Transverse colon (tissue), 4 donors: ENCODE measurements at regions of chr16 and their contacts with region 1.

Region 1: DNA sequence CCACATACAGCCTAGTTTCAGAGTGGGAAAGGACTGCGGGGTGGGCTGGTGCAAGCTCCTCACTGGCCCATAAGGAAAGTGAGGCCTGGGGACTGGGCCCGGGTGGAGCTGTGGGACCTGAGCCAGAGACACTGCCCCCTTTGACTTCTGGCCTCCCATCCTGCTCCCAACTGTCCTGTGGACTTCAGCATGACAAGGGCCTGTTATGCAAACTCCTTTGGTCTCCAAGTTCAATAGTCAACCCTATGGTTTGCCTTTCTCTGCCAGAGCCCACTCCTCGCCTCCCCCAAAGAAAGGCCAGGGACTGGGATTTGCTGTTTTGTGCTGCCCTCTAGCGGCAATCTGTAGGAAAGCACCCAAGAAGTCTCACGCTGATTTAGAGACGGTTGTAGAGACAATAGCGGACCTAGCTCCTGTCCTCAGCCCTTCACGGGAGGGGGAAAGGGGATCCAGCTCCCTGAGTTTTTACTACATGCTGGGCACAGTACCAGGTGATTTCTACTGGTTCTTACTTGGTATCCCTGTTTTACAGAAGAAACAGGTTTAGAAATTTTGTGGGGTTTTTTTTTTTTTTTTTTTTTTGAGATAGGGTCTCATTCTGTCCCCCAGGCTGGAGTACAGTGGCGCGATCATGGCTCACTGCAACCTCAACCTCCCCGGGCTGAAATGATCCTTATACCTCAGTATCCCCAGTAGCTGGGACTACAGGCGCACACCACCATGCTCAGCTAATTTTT is 1.2 kb upstream of the TLCD3B start:
- DNase-seq: peak; percentile 57
- H3K4me3 ChIP-seq: no peak overlapping the region
- H3K27ac ChIP-seq: no peak overlapping the region
- H3K4me1 ChIP-seq: peaks cover 0 to 9% (median 4%) of the 10 kb centered on the region in 4 donors
- H3K27me3 ChIP-seq: peaks cover 91% of the 10 kb centered on the region
- CTCF ChIP-seq: peak; percentile 57 to 71 (median 69)
- EP300 ChIP-seq: no peak
- POLR2A ChIP-seq: no peak

Region 2: DNA sequence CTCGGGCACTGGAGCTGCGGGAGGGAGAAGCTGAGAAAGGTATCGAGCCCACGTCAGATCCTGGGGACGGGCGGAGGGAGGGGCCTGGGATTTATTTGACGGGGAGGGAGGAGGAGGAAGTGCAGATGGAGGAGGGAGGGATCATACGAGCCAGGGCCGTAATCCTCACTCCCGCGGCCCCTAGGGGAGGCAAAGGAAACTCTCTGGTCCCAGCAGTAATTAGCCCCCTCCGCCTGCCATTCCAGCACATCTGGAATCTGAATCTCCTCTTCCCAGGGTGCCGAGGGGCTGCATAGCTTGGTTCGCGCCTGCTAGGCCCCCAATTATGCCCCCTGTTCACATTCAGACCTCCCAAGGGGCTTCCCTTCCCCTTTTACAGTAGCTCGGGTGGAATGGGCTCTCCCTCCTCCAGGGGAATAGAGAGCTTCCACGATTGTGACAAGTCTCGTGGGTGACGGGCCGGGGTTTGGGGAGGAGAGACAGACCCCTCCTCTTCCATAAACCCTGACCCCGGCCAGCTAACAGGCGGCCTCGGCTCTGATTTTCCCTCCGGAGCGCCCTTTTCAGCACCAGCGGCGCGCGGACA is 132.6 kb before region 1 on chr16 and contains the start of gene SEZ6L2:
- in situ Hi-C with region 1: loop called in 1 of 4 experiments (anchors 25 kb)
- intact Hi-C with region 1: no loop called
- DNase-seq: peak; percentile 86
- H3K4me3 ChIP-seq: peak within 1 kb of the TSS; percentile 30 to 74 (median 50)
- H3K27ac ChIP-seq: peak within 1 kb of the TSS; percentile 63 to 74 (median 69)
- H3K4me1 ChIP-seq: peaks cover 2 to 22% (median 15%) of the 10 kb centered on the region in 4 donors
- H3K27me3 ChIP-seq: peaks cover 31% of the 10 kb centered on the region
- CTCF ChIP-seq: peak in 3 of 5 experiments; percentile 23 to 72 (median 62)
- EP300 ChIP-seq: no peak
- POLR2A ChIP-seq: peak; percentile 37
- total RNA-seq, gene SEZ6L2: 2.0 to 9.7 (median 6.3) TPM

Region 3: GRCh38 chr16:30075507-30076275 is 43.4 kb after region 1 on chr16 and contains the start of gene PPP4C:
- in situ Hi-C with region 1: no loop called
- intact Hi-C with region 1: no loop called
- DNase-seq: peak; percentile 95
- H3K4me3 ChIP-seq: peak within 1 kb of the TSS; percentile 87 to 98 (median 92)
- H3K27ac ChIP-seq: peak within 1 kb of the TSS; percentile 91 to 95 (median 92)
- H3K4me1 ChIP-seq: peaks cover 15 to 35% (median 24%) of the 10 kb centered on the region in 4 donors
- H3K27me3 ChIP-seq: no peaks in the 10 kb centered on the region
- CTCF ChIP-seq: peak in 2 of 5 experiments; percentile 6 to 17
- EP300 ChIP-seq: no peak
- POLR2A ChIP-seq: peak; percentile 95
- total RNA-seq, gene PPP4C: 17.7 to 92.3 (median 74.3) TPM